ENCODE measurements at regions of chr4 and their contacts with region 1.

Region 1: GRCh38 chr4:77031544-77031943 is 44.2 kb downstream of the CCNI start:
- DNase-seq: peak in 3 of 14 experiments; percentile 45 to 67 (median 53)
- ATAC-seq: peak; percentile 82
- H3K4me3 ChIP-seq: no peak overlapping the region
- H3K4me3 Mint-ChIP-seq: peak overlapping the region; percentile 4
- H3K27ac ChIP-seq: no peak overlapping the region
- H3K27ac Mint-ChIP-seq: peak overlapping the region; percentile 56
- H3K4me1 ChIP-seq: peaks cover 11% of the 10 kb centered on the region
- H3K4me1 Mint-ChIP-seq: peaks cover 44% of the 10 kb centered on the region
- H3K27me3 ChIP-seq: no peaks in the 10 kb centered on the region
- H3K27me3 Mint-ChIP-seq: no peaks in the 10 kb centered on the region
- CTCF ChIP-seq: no peak

Region 2: DNA sequence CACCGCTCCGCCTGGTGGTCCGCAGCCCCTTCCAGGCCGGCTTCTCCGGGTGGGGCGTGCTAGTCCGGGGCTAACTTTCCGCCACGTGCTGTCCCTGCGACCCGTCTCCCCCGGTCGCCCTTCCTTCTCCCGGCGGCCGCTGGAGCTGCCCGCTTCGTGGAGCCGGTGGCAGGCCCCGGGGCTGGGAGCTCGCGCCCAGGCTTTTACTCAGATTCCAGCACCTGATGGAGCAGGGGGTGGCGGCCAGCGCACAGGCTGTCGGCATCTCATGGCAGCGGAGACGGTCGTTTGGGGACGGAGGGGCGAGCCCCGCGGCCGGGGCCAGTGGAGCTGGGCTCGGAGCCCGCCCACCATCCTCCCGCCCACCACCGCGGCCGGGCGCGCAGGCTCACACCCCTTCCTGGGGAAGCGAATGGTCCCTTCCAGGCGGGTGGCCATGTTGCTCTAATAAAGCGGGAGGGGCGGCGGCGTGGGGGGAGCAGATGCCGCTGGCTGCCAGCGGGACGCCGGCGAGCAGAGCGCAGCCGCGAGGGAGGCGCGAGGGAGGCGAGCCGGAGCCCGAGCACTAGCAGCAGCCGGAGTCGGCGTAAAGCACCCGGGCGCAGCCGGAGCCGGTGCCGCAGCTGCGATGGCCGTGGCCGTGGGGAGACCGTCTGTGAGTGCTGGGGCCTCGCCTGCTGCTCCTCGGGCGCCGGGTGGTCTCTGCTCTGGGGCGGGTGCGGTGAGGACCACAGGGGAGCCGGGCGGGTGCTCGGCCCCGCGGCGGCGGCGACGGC is 82.1 kb before region 1 on chr4 and contains the start of gene SEPTIN11:
- CTCF ChIA-PET with region 1: no interaction called
- POLR2A ChIA-PET with region 1: interaction called, 11 read pairs
- intact Hi-C with region 1: no loop called
- DNase-seq: peak; percentile 65 to 93 (median 78)
- ATAC-seq: peak; percentile 79
- H3K4me3 ChIP-seq: peak within 1 kb of the TSS; percentile 75
- H3K4me3 Mint-ChIP-seq: peak within 1 kb of the TSS; percentile 89
- H3K27ac ChIP-seq: no peak within 1 kb of the TSS
- H3K27ac Mint-ChIP-seq: peak within 1 kb of the TSS; percentile 76
- H3K4me1 ChIP-seq: peaks cover 27% of the 10 kb centered on the region
- H3K4me1 Mint-ChIP-seq: peaks cover 21% of the 10 kb centered on the region
- H3K27me3 ChIP-seq: no peaks in the 10 kb centered on the region
- H3K27me3 Mint-ChIP-seq: no peaks in the 10 kb centered on the region
- CTCF ChIP-seq: no peak
- total RNA-seq, gene SEPTIN11: 8.1 to 9.4 TPM